Cardiac septum (tissue), 1 donor: ENCODE measurements at regions of chr11 and their contacts with region 1.

Region 1: DNA sequence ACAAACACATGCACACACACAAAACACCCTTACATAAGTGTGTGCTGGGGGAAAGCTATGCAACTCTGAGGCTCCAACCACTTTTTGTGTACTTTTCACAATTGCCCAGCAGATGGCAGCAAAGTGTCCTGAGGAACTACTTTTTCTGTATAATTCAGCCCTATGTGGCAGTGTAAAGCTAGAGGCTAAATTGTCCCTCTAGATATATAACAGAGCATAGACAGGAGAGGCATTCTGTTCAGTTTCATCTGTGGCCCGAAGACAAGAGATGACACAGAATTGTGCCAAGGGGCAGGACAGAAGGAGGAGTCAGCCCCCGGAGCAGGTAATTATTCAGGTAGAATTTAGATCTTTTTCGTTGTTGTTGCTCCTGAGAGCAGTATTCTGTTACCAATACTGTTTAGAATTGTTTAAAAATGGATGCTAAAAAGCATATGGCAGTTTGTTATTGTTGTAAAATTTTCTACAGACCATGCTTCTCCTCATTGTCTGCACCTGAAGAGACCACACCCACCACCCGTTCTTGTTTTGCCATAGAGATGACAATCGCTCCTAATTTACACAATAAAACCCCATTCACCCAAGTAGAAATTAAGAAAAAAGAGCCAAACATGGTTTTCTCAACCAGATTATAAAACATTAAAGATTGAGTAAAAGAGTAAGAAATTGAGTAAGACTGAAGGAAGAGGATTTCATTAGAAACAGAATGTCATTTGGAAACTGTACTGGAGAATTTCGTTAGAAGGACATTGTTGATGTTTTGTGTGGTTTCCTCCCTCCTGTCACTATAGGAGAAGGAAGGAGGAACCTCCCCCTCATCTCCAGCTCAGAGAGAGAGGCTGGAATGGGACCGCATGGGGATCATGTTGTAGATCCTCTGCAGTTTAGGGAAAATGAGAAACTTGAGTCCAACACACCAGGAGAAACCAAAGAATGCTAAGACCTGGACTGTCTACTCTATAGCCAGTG is 14.5 kb upstream of the MS4A7 start:
- DNase-seq: no peak

Region 2: GRCh38 chr11:60615497-60615896 is 251.7 kb after region 1 on chr11:
- intact Hi-C with region 1: loop called (anchors 5 kb)
- DNase-seq: no peak